ENCODE measurements at regions of chr18 and their contacts with region 1.

Region 1: GRCh38 chr18:5890331-5891183 is 4.8 kb downstream of the TMEM200C start:
- DNase-seq: peak; percentile 90
- H3K4me3 ChIP-seq: peak overlapping the region in 1 of 2 experiments; percentile 47; a peak in 2 of 4 replicates
- H3K27ac ChIP-seq: no peak overlapping the region
- H3K4me1 ChIP-seq: no peaks in the 10 kb centered on the region; a peak in 1 of 4 replicates
- H3K27me3 ChIP-seq: peaks cover 25% of the 10 kb centered on the region; the same call in 1 of the 2 replicates
- CTCF ChIP-seq: peak; percentile 24; the same call in 1 of the 2 replicates
- EP300 ChIP-seq: no peak
- RAD21 ChIP-seq: no peak

Region 2: GRCh38 chr18:5500158-5500939 is 390.2 kb before region 1 on chr18:
- CTCF ChIA-PET with region 1: no interaction called
- POLR2A ChIA-PET with region 1: no interaction called
- DNase-seq: no peak
- H3K4me3 ChIP-seq: no peak overlapping the region
- H3K27ac ChIP-seq: no peak overlapping the region
- H3K4me1 ChIP-seq: no peaks in the 10 kb centered on the region
- H3K27me3 ChIP-seq: 0 out of 2 replicates have a peak, but pooled peaks cover 10% of the 10 kb centered on the region
- CTCF ChIP-seq: no peak
- EP300 ChIP-seq: no peak
- RAD21 ChIP-seq: no peak

Region 3: GRCh38 chr18:5868218-5869115 is 22.1 kb before region 1 on chr18:
- CTCF ChIA-PET with region 1: interaction called, 15 read pairs
- POLR2A ChIA-PET with region 1: no interaction called
- DNase-seq: peak; percentile 38
- H3K4me3 ChIP-seq: no peak overlapping the region
- H3K27ac ChIP-seq: no peak overlapping the region
- H3K4me1 ChIP-seq: no peaks in the 10 kb centered on the region
- H3K27me3 ChIP-seq: no peaks in the 10 kb centered on the region
- CTCF ChIP-seq: peak; percentile 89
- EP300 ChIP-seq: no peak
- RAD21 ChIP-seq: peak; percentile 85

Measured in SK-N-SH (cell line).